K562 (cell line): ENCODE measurements at regions of chr1 and their contacts with region 1.

Region 1: GRCh38 chr1:158203693-158204457 is 23.2 kb downstream of the CD1D start:
- DNase-seq: peak; percentile 31 to 71 (median 40)
- ATAC-seq: peak; percentile 97
- H3K4me3 ChIP-seq: no peak overlapping the region
- H3K27ac ChIP-seq: no peak overlapping the region
- H3K4me1 ChIP-seq: no peaks in the 10 kb centered on the region; a peak in 1 of 5 replicates
- H3K27me3 ChIP-seq: no peaks in the 10 kb centered on the region
- CTCF ChIP-seq: peak; percentile 36 to 73 (median 70); a peak in 5 of 6 replicates
- EP300 ChIP-seq: no peak
- POLR2A ChIP-seq: no peak
- RAD21 ChIP-seq: peak; percentile 73 to 77

Region 2: DNA sequence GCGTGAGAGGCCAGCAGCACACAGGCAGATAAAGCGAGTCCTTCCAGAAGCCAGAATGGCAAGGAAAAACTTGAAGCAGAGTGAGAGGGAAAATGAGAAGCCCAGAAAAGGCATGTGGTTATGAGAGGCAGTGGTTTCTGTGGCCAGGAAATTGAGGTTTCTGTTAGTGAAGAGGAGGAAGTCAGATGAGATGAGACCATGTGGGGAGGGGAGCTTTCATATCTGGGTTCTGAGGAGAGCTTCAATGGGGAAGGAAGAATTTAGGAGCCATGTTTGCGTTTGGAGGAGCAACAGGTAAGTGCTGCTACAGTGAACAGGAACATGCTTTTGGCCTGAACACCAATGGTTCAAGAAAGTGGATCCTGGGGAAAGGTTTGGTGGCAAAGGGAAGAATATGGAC is 44.2 kb after region 1 on chr1:
- CTCF ChIA-PET with region 1: no interaction called
- POLR2A ChIA-PET with region 1: no interaction called
- in situ Hi-C with region 1: no loop called
- intact Hi-C with region 1: no loop called
- DNase-seq: no peak
- ATAC-seq: no peak
- H3K4me3 ChIP-seq: no peak overlapping the region
- H3K27ac ChIP-seq: no peak overlapping the region
- H3K4me1 ChIP-seq: no peaks in the 10 kb centered on the region
- H3K27me3 ChIP-seq: no peaks in the 10 kb centered on the region
- CTCF ChIP-seq: no peak
- EP300 ChIP-seq: no peak
- POLR2A ChIP-seq: no peak
- RAD21 ChIP-seq: no peak

Region 3: GRCh38 chr1:158496374-158496773 is 292.5 kb after region 1 on chr1:
- CTCF ChIA-PET with region 1: interaction called, 4 read pairs
- POLR2A ChIA-PET with region 1: no interaction called
- in situ Hi-C with region 1: no loop called
- intact Hi-C with region 1: loop called (anchors 2 kb)
- DNase-seq: peak in 2 of 4 experiments; percentile 6 to 9
- ATAC-seq: peak; percentile 49; the same call in 2 of the 3 replicates
- H3K4me3 ChIP-seq: no peak overlapping the region
- H3K27ac ChIP-seq: no peak overlapping the region
- H3K4me1 ChIP-seq: no peaks in the 10 kb centered on the region
- H3K27me3 ChIP-seq: no peaks in the 10 kb centered on the region
- CTCF ChIP-seq: peak in 1 of 3 experiments; percentile 43; a peak in 3 of 6 replicates
- EP300 ChIP-seq: no peak
- POLR2A ChIP-seq: no peak
- RAD21 ChIP-seq: peak in 1 of 2 experiments; percentile 57; a peak in 2 of 4 replicates

Region 4: GRCh38 chr1:159077120-159077961 is 873.5 kb after region 1 on chr1:
- CTCF ChIA-PET with region 1: interaction called, 5 read pairs
- POLR2A ChIA-PET with region 1: no interaction called
- in situ Hi-C with region 1: no loop called
- intact Hi-C with region 1: loop called (anchors 5 kb)
- DNase-seq: peak; percentile 75 to 93 (median 79)
- ATAC-seq: peak; percentile 97
- H3K4me3 ChIP-seq: no peak overlapping the region
- H3K27ac ChIP-seq: peak overlapping the region; percentile 93
- H3K4me1 ChIP-seq: peaks cover 0 to 19% of the 10 kb centered on the region in 2 experiments; a peak in 4 of 5 replicates
- H3K27me3 ChIP-seq: no peaks in the 10 kb centered on the region
- CTCF ChIP-seq: no peak
- EP300 ChIP-seq: 0 out of 2 replicates have a peak, but pooled peaks have one; percentile 12
- POLR2A ChIP-seq: peak; percentile 78
- RAD21 ChIP-seq: no peak